ENCODE measurements at regions of chr1 and their contacts with region 1.

Region 1: GRCh38 chr1:26799479-26800142 is 11.9 kb downstream of the PIGV start:
- DNase-seq: no peak
- CTCF ChIP-seq: no peak

Region 2: DNA sequence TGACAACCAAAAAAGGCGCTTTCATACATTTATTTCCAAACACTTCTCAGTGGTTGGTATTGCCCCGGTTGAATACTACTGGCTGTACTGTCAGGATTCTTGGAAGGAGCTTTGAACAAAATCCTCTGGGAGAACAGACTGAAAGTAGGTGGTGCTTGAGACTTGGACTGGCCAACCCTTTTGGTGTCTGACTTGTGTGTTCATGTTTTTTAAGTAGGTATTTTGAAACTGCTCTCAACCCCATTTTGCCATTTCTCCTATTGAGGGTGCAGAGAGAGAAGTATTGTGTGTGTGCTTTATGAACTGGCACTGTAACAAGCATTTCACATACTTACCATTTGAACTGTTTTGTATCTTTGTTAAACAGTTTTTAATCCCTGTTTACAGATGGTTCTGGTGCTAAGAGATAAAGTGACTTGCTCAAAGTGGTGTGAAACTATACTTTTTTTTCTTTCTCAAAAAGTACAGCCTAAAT is 82.6 kb before region 1 on chr1:
- CTCF ChIA-PET with region 1: no interaction called
- POLR2A ChIA-PET with region 1: no interaction called
- DNase-seq: no peak
- CTCF ChIP-seq: no peak

Region 3: DNA sequence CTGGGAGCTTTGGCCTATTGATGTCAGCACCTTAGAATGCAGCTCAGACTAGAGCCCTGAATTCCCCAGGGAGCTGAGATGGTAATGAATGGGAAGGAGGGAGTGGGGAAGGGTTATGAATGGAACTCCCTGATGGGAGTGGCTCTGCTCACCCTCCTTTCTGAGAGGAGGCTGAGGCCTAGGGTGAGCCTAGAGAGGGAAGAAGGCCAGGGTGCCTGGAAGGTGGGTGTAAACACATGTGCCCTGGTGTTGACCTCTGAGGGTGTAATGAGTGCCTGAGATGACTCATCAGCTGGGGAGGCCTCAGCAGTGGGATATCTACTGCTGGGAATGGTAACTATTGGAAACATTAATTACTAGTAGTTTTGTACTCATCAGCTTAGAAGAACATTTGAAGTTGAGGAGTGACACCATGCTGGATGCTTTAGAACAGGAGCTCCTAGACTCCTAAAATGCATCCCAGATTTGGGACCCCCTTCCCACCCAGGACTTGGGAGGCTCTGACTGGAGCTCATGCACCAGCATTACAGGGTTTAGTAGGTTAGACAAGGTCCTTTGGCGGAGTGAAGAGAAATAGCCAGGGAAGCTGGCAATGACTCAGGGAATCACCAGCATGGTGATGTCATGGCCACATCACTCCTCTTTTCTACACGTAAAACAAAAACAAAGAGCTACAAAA is 27.8 kb before region 1 on chr1:
- CTCF ChIA-PET with region 1: no interaction called
- POLR2A ChIA-PET with region 1: no interaction called
- DNase-seq: peak; percentile 44
- CTCF ChIP-seq: no peak

Region 4: DNA sequence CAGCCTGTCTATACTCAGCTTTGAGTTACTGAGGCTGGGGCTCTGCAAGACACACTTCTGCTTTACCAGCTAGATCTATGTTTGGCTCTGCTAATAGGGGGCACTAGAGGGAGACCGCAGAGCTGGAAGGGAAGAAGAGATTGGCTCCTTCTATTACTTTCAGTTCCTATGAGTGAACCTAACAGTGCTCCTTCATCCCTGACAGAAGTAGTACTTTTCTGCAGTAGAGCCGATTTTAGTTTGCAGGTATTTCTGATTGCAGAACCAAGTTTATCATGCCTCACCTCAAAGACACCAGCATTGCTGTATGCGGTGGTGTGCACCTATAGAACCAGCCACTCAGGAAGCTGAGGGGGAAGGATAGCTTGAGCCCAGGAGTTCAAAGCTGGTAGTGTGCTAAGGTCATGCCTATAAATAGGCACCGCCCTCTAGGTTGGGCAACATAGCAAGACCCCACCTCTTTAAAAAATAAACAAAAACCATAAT is 21.2 kb after region 1 on chr1:
- CTCF ChIA-PET with region 1: interaction called, 12 read pairs
- POLR2A ChIA-PET with region 1: no interaction called
- DNase-seq: peak; percentile 80
- CTCF ChIP-seq: peak; percentile 52

Measured in GM10248 (cell line).